Activated CD4-positive, alpha-beta T cell treated with anti-CD3 and anti-CD28 coated beads, Interleukin-2, amount 10 ng/mL, durations not matched to agents 7 days and 5 days (primary cell): ENCODE measurements at regions of chr17 and their contacts with region 1.

Region 1: DNA sequence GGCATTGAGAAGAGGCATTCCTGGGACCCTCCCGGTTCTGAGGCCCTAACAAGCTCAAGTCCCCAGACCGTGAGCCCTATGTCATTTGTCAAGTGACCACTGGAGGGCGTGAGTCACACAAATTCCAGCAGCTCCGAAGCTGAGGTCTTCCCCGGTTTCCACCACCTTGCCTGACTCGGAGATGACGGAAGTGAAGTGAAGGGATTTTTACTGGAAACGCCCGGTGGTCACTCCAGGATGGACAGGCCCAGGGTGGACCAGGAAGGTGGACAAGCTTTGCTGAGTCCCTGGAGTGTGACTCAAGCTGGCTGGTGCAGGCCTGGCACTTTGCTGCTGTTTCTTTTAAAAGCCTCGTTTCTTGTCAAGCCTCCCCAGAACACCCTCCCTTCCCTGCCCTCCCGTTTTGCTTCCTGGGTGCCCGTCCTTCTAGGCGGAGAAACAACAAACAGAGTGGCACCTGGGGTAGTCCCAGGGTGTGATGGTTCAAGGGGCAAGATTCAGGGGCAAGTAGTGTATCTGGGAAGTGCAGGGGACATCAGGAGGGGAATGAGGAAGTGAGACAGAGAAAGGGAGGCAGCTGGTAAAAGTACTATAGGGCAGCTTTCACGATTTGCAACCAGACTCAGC is 5.3 kb upstream of the NOS2 start:
- DNase-seq: peak; percentile 89
- H3K4me3 Mint-ChIP-seq: peak overlapping the region; percentile 50
- H3K27ac Mint-ChIP-seq: peak overlapping the region; percentile 96
- H3K4me1 Mint-ChIP-seq: peaks cover 47% of the 10 kb centered on the region
- H3K27me3 Mint-ChIP-seq: peaks cover 3% of the 10 kb centered on the region

Region 2: GRCh38 chr17:27630607-27631410 is 174.8 kb before region 1 on chr17 and contains the start of gene LGALS9:
- CTCF ChIA-PET with region 1: no interaction called
- POLR2A ChIA-PET with region 1: no interaction called
- DNase-seq: peak; percentile 63
- H3K4me3 Mint-ChIP-seq: peak within 1 kb of the TSS; percentile 94
- H3K27ac Mint-ChIP-seq: peak within 1 kb of the TSS; percentile 94
- H3K4me1 Mint-ChIP-seq: peaks cover 65% of the 10 kb centered on the region
- H3K27me3 Mint-ChIP-seq: no peaks in the 10 kb centered on the region
- total RNA-seq, gene LGALS9: 223 to 233 TPM

Region 3: GRCh38 chr17:27760069-27760885 is 45.4 kb before region 1 on chr17:
- CTCF ChIA-PET with region 1: interaction called, 10 read pairs
- POLR2A ChIA-PET with region 1: no interaction called
- DNase-seq: peak; percentile 73
- H3K4me3 Mint-ChIP-seq: no peak overlapping the region
- H3K27ac Mint-ChIP-seq: no peak overlapping the region
- H3K4me1 Mint-ChIP-seq: no peaks in the 10 kb centered on the region
- H3K27me3 Mint-ChIP-seq: no peaks in the 10 kb centered on the region

Region 4: DNA sequence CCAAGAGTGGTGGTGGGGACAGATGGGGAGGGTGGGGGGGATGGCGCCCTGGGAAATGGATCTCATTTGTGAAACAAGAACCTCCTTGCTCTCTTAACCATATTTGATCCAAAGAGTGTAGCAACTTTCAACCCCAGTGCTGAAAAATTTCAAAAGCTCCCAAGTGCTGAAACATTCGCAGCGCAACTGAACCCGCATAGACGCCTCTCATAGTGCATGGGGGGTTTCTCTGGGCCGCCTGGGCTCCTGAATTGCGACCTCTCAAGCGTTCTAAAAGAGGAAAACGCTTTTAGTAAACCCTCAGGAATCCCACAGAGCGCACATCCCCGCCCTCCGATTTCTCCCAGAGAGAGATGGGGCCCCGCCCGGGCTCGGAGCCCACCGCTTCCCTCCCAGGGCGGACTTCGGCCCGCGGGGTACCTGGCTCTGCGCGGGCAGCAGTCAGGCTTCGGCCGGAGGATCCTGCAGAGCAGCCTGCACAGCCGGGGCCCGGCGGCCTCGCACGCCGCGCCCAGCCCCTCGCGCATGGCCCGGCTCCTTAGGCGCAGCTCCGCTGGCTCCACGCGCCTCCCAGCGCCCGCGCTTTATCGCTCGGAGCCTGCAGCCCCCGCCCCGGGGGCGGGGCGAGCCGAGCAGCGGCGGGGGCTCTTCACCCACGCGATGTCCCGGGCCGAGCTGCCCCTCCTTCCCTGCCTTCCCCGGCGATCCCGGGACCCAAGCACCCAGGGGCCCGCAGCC is 12.3 kb before region 1 on chr17:
- CTCF ChIA-PET with region 1: interaction called, 21 read pairs
- POLR2A ChIA-PET with region 1: no interaction called
- DNase-seq: no peak
- H3K4me3 Mint-ChIP-seq: no peak overlapping the region
- H3K27ac Mint-ChIP-seq: no peak overlapping the region
- H3K4me1 Mint-ChIP-seq: peaks cover 7% of the 10 kb centered on the region
- H3K27me3 Mint-ChIP-seq: peaks cover 37% of the 10 kb centered on the region

Region 5: DNA sequence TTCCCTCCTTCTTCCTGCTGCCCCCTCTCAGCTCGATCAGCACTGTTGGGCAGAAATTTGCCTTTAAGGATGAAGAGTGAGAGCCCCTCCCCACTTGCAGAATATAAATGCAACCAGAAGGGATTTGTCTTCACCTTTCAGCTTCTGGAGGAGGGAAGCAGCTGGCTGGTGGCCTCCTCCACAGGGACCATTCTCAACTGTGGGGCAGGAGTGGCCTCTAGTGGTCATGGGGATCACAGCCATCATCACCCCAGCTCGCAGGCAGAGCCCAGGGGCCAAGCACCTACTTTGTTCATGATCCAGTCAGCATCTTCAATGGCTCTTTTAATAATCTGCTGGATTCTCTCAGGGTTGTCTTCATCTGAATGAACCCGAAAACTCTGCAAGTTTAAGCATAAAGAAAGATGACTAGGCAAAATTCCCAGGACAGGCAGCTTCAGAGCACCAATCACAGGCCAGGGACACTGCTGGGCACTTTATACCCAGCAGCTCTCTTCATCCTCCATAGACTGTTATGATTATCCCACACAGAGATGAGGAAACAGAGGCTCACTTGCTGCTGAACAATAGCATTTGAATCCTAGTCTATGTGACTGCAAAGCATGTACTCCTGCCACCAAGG is 74.5 kb after region 1 on chr17:
- CTCF ChIA-PET with region 1: interaction called, 225 read pairs
- POLR2A ChIA-PET with region 1: interaction called, 22 read pairs
- DNase-seq: peak; percentile 79
- H3K4me3 Mint-ChIP-seq: no peak overlapping the region
- H3K27ac Mint-ChIP-seq: peak overlapping the region; percentile 65
- H3K4me1 Mint-ChIP-seq: peaks cover 33% of the 10 kb centered on the region
- H3K27me3 Mint-ChIP-seq: no peaks in the 10 kb centered on the region

Region 6: DNA sequence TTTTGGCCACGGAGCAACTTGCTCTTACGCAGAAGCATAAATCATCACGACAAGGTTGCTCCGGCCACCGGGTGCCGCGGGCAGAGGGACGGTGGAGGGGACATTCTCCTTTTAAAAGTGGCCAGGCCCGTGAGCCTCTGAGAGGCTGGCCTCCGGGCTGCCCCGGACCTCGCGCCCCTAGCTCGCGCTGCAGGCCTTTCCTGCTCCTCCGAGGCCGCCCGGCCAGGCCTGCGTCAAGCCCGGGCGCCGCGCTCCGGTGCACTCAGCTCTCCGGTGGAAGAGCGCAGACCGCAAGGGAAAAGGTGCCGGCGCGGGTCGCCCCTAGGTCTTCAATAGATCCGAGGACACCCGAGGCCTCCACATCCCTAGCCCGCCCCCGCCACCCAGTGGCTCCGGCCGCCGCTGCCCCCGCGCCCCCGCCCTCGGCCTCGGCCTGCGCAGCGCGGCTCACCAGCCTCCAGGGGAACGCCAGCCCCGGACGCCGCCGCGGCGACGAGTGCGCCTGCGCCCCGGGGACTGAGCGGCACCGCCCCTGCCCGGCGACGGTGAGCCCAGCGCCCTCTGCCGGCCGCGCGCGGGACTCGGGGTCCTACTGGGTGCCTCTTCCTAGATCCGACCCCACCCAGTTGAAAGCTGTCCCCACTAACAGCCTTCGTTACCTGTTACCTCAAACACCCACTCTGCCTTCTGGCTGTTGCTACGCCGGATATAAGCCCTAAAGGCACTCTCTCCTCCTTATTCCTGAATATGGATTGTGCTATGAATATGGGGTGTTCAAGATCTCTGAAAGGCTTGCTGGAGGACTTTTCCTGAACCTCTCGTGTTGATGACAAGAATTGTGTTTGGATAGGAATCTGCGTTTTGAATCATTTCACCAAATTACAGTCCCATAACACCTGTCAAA is 87.5 kb after region 1 on chr17 and contains the start of gene LYRM9:
- CTCF ChIA-PET with region 1: interaction called, 106 read pairs
- POLR2A ChIA-PET with region 1: interaction called, 7 read pairs
- DNase-seq: peak; percentile 90
- H3K4me3 Mint-ChIP-seq: peak within 1 kb of the TSS; percentile 72
- H3K27ac Mint-ChIP-seq: peak within 1 kb of the TSS; percentile 81
- H3K4me1 Mint-ChIP-seq: peaks cover 22% of the 10 kb centered on the region
- H3K27me3 Mint-ChIP-seq: peaks cover 27% of the 10 kb centered on the region
- total RNA-seq, gene LYRM9: 5.9 to 6.1 TPM